Caco-2 (cell line): ENCODE measurements at regions of chr2 and their contacts with region 1.

Region 1: GRCh38 chr2:137947728-137948336 is 16.4 kb upstream of the HNMT start:
- DNase-seq: peak; percentile 71 to 75
- H3K4me3 ChIP-seq: no peak overlapping the region
- H3K4me3 Mint-ChIP-seq: no peak overlapping the region
- H3K27ac Mint-ChIP-seq: peak overlapping the region; percentile 8
- H3K4me1 ChIP-seq: peaks cover 16% of the 10 kb centered on the region
- H3K4me1 Mint-ChIP-seq: peaks cover 34% of the 10 kb centered on the region
- H3K27me3 ChIP-seq: no peaks in the 10 kb centered on the region
- H3K27me3 Mint-ChIP-seq: no peaks in the 10 kb centered on the region
- CTCF ChIP-seq: peak; percentile 54 to 57

Region 2: DNA sequence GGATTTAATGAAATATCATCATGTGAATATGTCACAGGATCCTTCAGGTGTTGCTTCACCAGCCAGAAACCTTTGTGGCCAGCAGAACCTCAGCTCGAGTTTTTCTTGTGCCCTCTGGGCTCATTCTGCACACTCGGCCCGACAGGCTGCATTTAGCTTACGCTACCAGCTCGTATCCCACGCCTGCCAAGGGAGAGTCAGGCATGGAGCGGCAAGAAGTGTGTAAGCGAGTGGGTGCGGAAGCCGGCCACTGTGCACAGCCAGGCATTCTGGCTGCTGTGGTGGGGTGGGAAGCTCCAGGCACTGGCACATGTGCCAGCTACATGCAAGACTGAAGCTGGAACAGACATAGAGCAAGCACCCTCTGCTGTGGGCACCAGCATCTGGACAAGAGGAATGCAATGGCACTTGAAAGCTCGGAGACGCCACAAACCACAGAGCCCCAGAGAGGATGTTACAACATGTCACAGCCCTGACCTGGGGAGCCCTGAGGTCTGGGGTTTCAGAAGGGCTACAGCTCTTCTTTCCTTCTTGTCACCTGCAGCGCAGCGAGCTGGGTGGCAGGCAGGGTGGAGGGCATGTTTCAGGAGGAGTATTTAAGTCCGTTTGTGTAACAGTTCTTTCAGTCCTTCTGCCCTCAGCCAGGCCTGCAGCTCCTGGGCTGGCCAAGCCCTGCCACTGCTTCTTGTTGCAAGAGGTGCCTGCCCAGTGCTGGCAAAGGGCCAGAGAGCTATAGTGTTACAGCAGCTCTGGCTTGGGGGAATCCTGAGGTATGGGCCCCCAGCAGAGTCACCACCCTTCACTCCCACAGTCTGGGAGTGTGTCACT is 240.8 kb before region 1 on chr2:
- CTCF ChIA-PET with region 1: no interaction called
- POLR2A ChIA-PET with region 1: no interaction called
- intact Hi-C with region 1: no loop called
- DNase-seq: no peak
- H3K4me3 ChIP-seq: no peak overlapping the region
- H3K4me3 Mint-ChIP-seq: no peak overlapping the region
- H3K27ac Mint-ChIP-seq: no peak overlapping the region
- H3K4me1 ChIP-seq: no peaks in the 10 kb centered on the region
- H3K4me1 Mint-ChIP-seq: peaks cover 7% of the 10 kb centered on the region
- H3K27me3 ChIP-seq: no peaks in the 10 kb centered on the region
- H3K27me3 Mint-ChIP-seq: no peaks in the 10 kb centered on the region
- CTCF ChIP-seq: no peak

Region 3: DNA sequence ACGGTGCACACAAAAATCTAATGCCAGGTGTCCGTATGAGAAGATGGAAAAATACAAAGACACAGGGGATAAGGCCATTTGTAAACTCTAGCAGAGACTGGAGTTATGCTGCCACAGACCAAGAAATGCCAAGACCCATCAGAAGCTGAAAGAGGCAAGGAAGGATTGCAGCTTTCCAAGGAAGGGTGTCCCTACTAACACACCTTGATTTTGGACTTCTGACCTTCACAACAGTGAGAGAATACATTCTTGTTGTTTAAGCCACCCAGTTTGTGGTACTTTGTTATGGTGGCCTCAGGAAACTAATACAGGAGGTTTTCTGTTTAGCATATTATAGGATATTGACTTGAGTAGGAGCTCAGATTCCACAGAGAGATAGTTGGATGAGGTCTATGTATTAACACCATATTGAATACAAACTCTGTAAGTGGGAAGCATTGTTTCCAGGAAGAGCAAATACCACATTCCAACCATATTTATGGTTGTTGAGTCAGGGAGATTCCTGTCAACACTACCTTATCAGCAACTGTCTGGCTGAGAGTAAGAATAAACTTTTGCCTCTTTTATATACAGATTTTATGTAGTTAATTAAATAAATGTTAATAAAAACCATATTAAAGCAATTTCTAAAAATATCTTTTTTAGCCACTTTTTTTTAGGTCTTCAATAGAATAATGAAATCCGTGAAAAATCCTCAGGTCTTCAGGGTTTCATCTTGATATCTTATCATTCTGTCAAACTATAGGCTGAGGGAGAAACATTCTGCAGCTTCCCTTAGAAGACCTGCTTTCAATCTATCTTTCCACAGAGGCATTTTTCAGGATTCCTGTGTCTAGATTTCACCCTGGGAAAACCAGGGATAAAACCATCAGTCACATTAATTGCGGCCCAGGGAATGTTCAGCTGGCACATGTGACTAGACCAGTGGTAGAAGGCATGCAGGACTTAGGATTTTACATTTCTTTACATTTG is 19.0 kb before region 1 on chr2:
- CTCF ChIA-PET with region 1: interaction called, 3 read pairs
- POLR2A ChIA-PET with region 1: no interaction called
- intact Hi-C with region 1: loop called (anchors 2 kb)
- DNase-seq: peak; percentile 49 to 71
- H3K4me3 ChIP-seq: no peak overlapping the region
- H3K4me3 Mint-ChIP-seq: peak overlapping the region; percentile 37
- H3K27ac Mint-ChIP-seq: peak overlapping the region; percentile 91
- H3K4me1 ChIP-seq: peaks cover 21% of the 10 kb centered on the region
- H3K4me1 Mint-ChIP-seq: peaks cover 20% of the 10 kb centered on the region
- H3K27me3 ChIP-seq: no peaks in the 10 kb centered on the region
- H3K27me3 Mint-ChIP-seq: no peaks in the 10 kb centered on the region
- CTCF ChIP-seq: no peak

Region 4: DNA sequence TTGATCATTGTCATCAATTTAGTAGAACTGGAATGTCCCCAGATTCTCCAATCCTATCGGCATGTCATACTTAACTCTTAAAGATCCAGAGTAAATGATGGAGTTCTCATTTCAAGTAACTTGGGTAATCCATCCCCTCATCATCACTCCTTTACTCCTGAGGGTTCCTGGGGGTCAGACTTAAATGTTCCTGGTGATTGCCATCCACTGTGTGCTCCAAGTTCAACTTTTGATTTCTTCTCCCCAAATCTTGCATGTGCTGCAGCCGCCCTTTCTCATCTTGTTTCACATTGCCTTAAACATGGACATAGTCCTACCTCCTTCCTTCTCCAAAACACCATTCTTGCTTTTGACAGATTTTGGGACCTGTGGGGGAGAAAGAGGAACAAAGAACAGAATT is 59.6 kb after region 1 on chr2:
- CTCF ChIA-PET with region 1: no interaction called
- POLR2A ChIA-PET with region 1: no interaction called
- intact Hi-C with region 1: no loop called
- DNase-seq: no peak
- H3K4me3 ChIP-seq: no peak overlapping the region
- H3K4me3 Mint-ChIP-seq: no peak overlapping the region
- H3K27ac Mint-ChIP-seq: no peak overlapping the region
- H3K4me1 ChIP-seq: no peaks in the 10 kb centered on the region
- H3K4me1 Mint-ChIP-seq: no peaks in the 10 kb centered on the region
- H3K27me3 ChIP-seq: no peaks in the 10 kb centered on the region
- H3K27me3 Mint-ChIP-seq: no peaks in the 10 kb centered on the region
- CTCF ChIP-seq: no peak

Region 5: GRCh38 chr2:138018866-138019688 is 71.2 kb after region 1 on chr2:
- CTCF ChIA-PET with region 1: no interaction called
- POLR2A ChIA-PET with region 1: no interaction called
- intact Hi-C with region 1: loop called (anchors 1 kb)
- DNase-seq: no peak
- H3K4me3 ChIP-seq: no peak overlapping the region
- H3K4me3 Mint-ChIP-seq: no peak overlapping the region
- H3K27ac Mint-ChIP-seq: no peak overlapping the region
- H3K4me1 ChIP-seq: peaks cover 4% of the 10 kb centered on the region; the same call in 1 of the 2 replicates
- H3K4me1 Mint-ChIP-seq: no peaks in the 10 kb centered on the region
- H3K27me3 ChIP-seq: no peaks in the 10 kb centered on the region
- H3K27me3 Mint-ChIP-seq: no peaks in the 10 kb centered on the region
- CTCF ChIP-seq: no peak

Region 6: DNA sequence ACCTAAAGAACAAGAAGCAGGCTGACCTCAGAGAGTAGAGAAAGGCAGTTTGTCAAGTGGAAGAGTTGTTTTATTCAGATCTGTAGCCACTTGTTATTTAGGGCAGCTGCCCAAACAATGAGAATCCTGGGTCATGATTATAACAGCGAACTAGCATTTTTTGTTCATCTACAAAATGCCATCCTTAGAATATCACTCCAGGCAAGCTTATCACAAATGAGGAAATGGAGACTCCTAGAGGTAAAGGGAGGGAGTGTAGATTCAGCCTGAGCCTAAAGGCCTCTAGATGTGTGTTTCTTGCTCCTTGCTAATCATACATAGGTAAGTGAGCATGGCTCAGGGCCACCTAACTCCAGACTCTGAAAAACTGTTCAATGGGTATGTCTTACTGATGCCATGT is 142.5 kb after region 1 on chr2:
- CTCF ChIA-PET with region 1: interaction called, 4 read pairs
- POLR2A ChIA-PET with region 1: no interaction called
- intact Hi-C with region 1: loop called (anchors 1 kb)
- DNase-seq: peak in 1 of 2 experiments; percentile 36
- H3K4me3 ChIP-seq: no peak overlapping the region
- H3K4me3 Mint-ChIP-seq: no peak overlapping the region
- H3K27ac Mint-ChIP-seq: peak overlapping the region; percentile 11
- H3K4me1 ChIP-seq: peaks cover 10% of the 10 kb centered on the region
- H3K4me1 Mint-ChIP-seq: no peaks in the 10 kb centered on the region
- H3K27me3 ChIP-seq: no peaks in the 10 kb centered on the region
- H3K27me3 Mint-ChIP-seq: no peaks in the 10 kb centered on the region
- CTCF ChIP-seq: peak in 1 of 2 experiments; percentile 42

Region 7: DNA sequence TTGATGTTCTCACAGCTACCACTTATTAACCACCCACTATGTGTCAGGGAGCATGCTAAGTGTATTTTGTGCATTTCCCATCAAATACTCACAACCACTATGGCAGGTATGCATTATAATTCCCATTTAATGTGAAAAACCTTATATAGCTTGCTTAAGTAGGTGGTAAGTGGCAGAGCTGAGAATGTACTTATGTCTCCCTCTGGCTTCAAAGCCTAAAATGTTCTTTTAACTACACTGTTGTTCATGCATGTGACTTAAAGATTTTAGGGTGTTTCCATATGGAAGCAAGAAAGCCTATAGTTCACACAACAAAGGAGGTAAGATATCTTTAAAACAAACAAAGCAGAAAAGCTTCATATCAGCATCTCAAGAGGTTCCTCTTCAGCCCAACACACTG is 244.3 kb after region 1 on chr2:
- CTCF ChIA-PET with region 1: no interaction called
- POLR2A ChIA-PET with region 1: no interaction called
- intact Hi-C with region 1: loop called (anchors 1 kb)
- DNase-seq: no peak
- H3K4me3 ChIP-seq: no peak overlapping the region
- H3K4me3 Mint-ChIP-seq: no peak overlapping the region
- H3K27ac Mint-ChIP-seq: no peak overlapping the region
- H3K4me1 ChIP-seq: peaks cover 19% of the 10 kb centered on the region
- H3K4me1 Mint-ChIP-seq: peaks cover 21% of the 10 kb centered on the region
- H3K27me3 ChIP-seq: no peaks in the 10 kb centered on the region
- H3K27me3 Mint-ChIP-seq: no peaks in the 10 kb centered on the region
- CTCF ChIP-seq: no peak

Region 8: GRCh38 chr2:138275881-138276280 is 328.0 kb after region 1 on chr2:
- CTCF ChIA-PET with region 1: no interaction called
- POLR2A ChIA-PET with region 1: no interaction called
- intact Hi-C with region 1: loop called (anchors 10 kb)
- DNase-seq: no peak
- H3K4me3 ChIP-seq: no peak overlapping the region
- H3K4me3 Mint-ChIP-seq: peak overlapping the region; percentile 46
- H3K27ac Mint-ChIP-seq: peak overlapping the region; percentile 86
- H3K4me1 ChIP-seq: peaks cover 49% of the 10 kb centered on the region
- H3K4me1 Mint-ChIP-seq: peaks cover 29% of the 10 kb centered on the region
- H3K27me3 ChIP-seq: no peaks in the 10 kb centered on the region
- H3K27me3 Mint-ChIP-seq: no peaks in the 10 kb centered on the region
- CTCF ChIP-seq: no peak

Region 9: DNA sequence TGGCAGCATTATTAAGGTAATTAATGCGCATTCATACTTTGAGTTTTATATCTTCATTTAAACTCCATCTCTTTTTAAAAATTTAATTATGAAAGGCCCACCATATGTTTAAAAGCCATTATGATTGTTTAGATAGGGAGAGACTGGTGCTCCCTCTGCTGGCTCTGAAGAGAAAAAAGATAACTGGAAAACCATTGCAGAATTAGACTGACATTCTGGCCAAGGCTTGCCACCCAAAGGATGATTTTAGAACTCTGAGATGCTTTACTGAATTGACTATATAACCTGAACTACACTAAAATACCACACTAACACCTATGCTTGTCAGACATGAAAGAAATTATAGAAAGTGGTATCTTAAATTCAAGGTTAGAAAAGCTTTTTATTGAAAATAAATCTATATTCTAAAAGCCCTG is 426.2 kb after region 1 on chr2:
- CTCF ChIA-PET with region 1: no interaction called
- POLR2A ChIA-PET with region 1: no interaction called
- intact Hi-C with region 1: loop called (anchors 1 kb)
- DNase-seq: peak in 1 of 2 experiments; percentile 43
- H3K4me3 ChIP-seq: no peak overlapping the region
- H3K4me3 Mint-ChIP-seq: no peak overlapping the region
- H3K27ac Mint-ChIP-seq: no peak overlapping the region
- H3K4me1 ChIP-seq: no peaks in the 10 kb centered on the region
- H3K4me1 Mint-ChIP-seq: peaks cover 6% of the 10 kb centered on the region
- H3K27me3 ChIP-seq: no peaks in the 10 kb centered on the region
- H3K27me3 Mint-ChIP-seq: no peaks in the 10 kb centered on the region
- CTCF ChIP-seq: peak; percentile 75 to 80